PC-9 (cell line): ENCODE measurements at regions of chr6 and their contacts with region 1.

Region 1: DNA sequence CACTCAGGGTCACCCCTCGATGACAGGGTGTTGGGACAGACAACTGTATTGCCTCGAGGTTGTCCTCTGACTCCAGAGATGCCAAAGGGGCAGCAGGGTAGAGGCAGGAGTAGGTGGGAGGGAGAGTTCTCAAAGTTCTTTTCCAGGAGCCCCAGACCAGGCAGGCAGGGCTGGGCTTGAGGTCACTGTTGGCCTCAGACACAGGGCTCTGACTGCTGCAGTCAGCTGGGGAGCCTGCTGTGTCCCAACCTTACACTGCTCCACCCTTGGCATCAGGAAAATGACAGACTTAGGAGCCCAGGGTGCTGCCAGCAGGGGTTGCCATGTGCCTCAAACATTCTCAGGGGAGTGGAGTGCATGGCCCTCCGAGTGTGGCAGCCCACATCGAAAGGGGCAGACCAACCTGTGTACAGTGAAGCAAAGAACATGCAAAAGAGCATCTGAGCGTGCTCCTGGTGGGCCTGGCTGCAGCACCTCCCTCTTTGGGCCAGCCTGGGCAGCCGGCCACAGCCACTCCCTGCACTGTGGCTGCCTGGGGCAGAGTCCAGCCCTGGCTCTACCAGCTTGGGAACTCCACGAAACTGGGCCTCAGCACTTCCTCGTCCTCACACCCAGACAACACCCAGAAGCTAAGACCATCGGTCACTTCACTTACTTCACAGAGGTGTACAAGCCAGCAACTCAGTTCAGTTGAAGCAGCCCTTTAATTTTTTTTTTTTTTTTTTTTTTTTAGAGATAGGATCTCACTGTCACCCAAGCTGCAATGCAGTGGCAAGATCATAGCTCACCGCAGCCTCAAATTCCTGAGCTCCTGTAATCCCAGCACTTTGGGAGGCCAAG is 24.0 kb downstream of the C6orf132 start:
- DNase-seq: peak; percentile 95 to 99
- H3K4me3 ChIP-seq: no peak overlapping the region
- H3K27ac ChIP-seq: peak overlapping the region; percentile 94
- H3K4me1 ChIP-seq: peaks cover 88% of the 10 kb centered on the region
- H3K27me3 ChIP-seq: no peaks in the 10 kb centered on the region
- CTCF ChIP-seq: no peak

Region 2: GRCh38 chr6:42028234-42029061 is 89.9 kb before region 1 on chr6:
- CTCF ChIA-PET with region 1: no interaction called
- POLR2A ChIA-PET with region 1: interaction called, 25 read pairs
- intact Hi-C with region 1: no loop called
- DNase-seq: no peak
- H3K4me3 ChIP-seq: no peak overlapping the region
- H3K27ac ChIP-seq: no peak overlapping the region
- H3K4me1 ChIP-seq: peaks cover 14% of the 10 kb centered on the region
- H3K27me3 ChIP-seq: no peaks in the 10 kb centered on the region
- CTCF ChIP-seq: no peak

Region 3: GRCh38 chr6:42086046-42087035 is 32.0 kb before region 1 on chr6:
- CTCF ChIA-PET with region 1: interaction called, 15 read pairs
- POLR2A ChIA-PET with region 1: interaction called, 3 read pairs
- intact Hi-C with region 1: loop called (anchors 1 kb)
- DNase-seq: no peak
- H3K4me3 ChIP-seq: no peak overlapping the region
- H3K27ac ChIP-seq: peak overlapping the region; percentile 78
- H3K4me1 ChIP-seq: peaks cover 31% of the 10 kb centered on the region
- H3K27me3 ChIP-seq: no peaks in the 10 kb centered on the region
- CTCF ChIP-seq: no peak; the same call in 1 of the 2 replicates

Region 4: DNA sequence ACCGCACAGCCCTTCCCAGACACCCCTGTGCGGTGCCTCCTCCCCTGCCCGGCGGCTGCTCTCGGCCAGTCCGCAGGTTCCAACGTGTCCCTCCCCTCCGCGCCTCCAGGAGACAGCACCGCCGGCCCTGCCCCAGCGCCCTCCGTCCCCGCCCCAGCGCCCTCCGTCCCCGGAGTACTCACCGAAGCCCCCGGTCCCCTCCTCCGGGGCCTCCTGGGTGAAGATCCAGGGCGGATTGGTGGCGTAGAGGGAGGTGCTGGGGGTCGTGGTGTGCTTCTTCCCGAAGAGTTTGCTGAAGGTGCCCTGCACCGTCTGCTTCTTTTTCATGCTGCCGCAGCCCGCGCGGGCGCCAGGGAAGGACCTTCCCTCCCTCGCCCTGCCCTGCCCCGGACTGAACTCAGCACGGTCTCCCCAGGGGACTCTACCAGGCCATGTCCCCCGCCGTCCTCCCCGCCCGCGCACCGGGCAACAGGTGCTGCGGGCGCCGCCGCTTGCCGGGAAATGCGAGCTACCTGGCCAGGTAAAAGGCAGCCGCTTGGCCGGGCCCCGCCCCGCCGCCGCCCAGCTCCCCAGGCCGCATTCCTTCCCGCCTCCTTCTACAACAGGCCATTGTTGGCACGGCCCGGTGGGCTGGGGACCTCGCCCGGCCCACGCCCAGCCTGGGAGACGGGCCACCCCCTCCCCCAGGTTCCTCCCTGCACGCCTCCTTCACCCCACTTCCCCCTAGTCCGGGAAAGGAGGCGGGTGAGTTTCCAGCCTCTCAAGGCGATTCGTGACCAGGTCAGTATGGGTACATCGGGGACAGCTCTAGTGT is 23.9 kb after region 1 on chr6 and contains the start of gene C6orf132:
- CTCF ChIA-PET with region 1: interaction called, 7 read pairs
- POLR2A ChIA-PET with region 1: interaction called, 68 read pairs
- intact Hi-C with region 1: loop called (anchors 1 kb)
- DNase-seq: peak; percentile 81 to 95
- H3K4me3 ChIP-seq: peak within 1 kb of the TSS; percentile 97
- H3K27ac ChIP-seq: peak within 1 kb of the TSS; percentile 95
- H3K4me1 ChIP-seq: peaks cover 50% of the 10 kb centered on the region
- H3K27me3 ChIP-seq: no peaks in the 10 kb centered on the region
- CTCF ChIP-seq: no peak; the same call in 1 of the 2 replicates
- total RNA-seq, gene C6orf132: 49.8 and 53.9 TPM in 2 replicates

Region 5: DNA sequence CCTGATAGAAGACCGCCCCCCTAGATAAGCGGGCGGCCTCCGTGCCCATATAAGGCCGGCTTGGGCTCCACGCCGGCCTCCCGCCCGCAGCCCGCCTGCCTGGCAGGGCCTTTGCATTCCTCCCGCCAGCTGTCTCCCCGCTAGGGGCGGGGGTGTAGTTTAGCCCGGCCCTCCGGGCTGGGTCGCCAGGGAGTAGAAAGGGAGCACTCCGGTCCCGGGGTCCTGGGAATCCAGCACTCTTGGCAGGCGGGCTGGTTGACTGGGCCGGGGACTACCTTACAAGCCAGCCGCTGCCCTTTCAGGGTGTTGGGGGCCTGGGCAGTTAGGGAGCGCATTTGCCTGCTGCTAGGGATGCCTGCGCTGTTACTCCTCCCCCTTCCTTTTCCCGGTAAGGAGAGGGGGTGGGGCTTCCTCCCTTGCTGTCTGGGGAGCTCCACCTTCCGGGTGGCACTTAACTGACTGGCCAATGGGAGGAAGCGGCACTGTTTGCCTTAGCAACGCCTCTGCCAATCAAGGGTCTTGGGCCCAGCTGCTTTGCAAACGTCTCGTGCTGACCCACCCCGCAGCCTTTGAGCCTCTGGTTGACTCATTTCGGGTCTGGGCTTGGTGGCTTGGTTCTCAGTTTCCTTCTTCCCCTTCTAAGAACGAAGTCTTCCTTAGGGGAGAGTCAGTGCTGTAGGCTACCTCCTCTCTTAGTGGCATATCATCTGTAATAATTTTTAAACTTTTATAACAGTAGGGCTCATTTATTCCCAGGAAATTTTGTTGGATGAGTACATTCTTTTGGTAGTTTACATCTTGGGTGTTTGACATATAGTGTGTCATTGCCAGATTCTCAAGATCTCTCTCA is 1056.1 kb after region 1 on chr6:
- CTCF ChIA-PET with region 1: no interaction called
- POLR2A ChIA-PET with region 1: interaction called, 12 read pairs
- intact Hi-C with region 1: no loop called
- DNase-seq: peak; percentile 96 to 98
- H3K4me3 ChIP-seq: peak overlapping the region; percentile 49; the same call in 1 of the 2 replicates
- H3K27ac ChIP-seq: peak overlapping the region; percentile 40
- H3K4me1 ChIP-seq: peaks cover 29% of the 10 kb centered on the region
- H3K27me3 ChIP-seq: no peaks in the 10 kb centered on the region
- CTCF ChIP-seq: no peak